Sciatic nerve (tissue), 2 donors: ENCODE measurements at regions of chr21 and their contacts with region 1.

Region 1: DNA sequence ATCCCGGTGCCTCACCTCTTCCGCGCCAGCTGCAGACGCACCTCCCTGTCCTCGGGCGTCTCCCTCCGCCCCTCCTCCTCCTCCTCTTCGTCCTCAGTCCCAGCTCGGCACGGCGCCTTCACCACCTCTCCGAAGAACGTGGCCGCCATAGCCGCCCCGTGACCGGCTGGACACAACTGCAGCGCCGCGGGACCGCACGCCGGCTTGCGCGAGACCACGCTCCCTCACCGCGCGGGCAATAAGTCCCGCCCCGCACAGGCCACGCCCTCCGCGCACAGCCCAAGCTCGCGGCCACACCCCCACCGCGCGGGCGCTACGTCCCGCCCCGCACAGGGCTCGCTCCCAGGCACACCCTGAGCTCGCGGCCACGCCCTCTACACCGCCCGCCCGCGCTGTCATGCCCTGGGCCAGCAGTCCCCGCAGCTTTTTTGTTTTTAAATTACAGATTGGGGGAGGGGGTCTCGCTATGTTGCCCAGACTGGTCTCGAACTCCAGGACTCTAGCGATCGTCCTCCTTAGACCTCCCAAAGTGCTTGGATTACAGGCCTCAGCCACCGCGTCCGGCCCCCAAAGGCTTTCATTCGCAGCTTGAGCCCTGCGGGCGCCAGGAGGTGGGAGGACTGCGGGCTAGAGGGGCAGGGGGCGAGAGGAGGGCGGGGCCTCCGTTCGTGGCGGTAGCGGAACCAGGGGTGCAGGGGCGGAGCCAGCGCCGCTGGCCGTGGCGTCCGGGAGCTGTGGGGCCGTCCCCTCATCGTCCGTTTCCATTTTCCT is at the start of gene PSMG1:
- DNase-seq: peak; percentile 96
- ATAC-seq: peak; percentile 97
- total RNA-seq, gene PSMG1: 18.2 TPM

Region 2: DNA sequence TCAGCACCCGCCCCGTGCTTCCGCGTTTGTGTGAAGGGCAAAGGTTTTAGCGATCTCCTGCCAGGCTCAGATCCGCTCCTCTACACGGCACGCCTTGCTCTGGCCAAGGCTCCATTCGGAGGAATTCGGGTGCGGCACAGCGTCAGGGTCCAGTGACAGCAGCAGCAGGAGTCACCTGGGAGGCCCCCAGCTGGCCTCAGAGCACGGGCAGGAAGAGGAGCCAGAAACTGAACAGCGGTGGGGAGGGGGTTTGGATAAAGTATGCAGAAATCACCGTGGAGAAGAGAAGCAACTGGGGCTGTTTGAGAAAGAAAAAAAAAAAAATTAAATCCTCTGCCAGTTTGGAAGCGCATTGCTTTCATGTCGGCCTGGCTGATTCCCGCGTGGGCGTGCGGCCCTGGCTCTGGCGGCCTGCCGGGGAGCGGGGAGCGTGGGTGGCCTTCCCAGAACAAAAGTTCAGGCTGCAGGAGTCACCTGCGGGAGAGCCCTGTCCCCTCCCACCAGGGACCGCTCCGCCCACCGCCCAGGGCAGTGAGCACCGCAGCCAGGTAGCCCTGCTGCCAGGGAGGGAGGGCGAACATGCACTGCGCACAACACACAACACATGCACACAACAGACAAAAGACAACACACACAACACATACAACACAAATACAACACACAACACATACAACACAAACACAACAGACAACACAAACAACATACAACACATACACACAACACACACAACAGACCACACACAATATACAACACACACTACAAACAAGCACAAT is 270.1 kb before region 1 on chr21:
- intact Hi-C with region 1: no loop called
- DNase-seq: peak; percentile 79
- ATAC-seq: peak; percentile 92

Region 3: DNA sequence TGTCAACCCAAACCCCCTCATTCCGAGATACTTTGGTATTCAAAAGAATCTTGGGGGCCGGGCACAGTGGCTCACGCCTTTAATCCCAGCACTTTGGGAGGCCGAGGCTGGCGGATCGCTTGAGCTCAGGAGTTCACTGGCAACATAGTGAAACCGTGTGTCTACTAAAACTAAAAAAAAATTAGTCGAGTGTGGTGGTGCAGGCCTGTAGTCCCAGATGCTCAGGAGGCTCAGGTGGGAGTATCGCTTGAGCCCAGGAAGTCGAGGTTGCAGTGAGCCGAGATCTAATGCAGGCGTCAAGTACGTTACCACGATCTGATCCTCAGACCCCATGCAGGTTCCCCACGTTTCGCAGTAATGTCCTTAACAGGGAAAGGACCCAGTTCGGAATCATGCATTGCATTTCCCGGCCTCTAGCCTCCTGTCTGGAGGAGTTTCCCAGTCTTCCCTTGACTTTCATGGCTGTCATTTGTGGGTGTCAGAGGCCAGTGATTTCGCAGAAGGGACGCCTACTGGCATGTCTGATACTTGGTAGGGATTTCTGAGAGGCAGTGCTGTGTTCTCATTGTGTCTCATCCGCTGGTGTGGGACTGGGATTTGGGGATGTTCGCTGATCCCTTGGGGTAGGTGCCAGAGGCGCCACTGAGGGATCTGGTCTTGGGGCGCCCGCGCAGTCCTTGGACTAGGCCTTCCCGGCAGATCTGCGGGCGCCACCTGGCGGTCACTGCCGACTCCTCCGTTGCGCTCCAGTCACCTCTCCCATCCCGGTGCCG is 204.8 kb after region 1 on chr21:
- intact Hi-C with region 1: loop called (anchors 10 kb)
- DNase-seq: peak; percentile 97
- ATAC-seq: peak; percentile 90

Region 4: GRCh38 chr21:41068967-41069642 is 1885.7 kb after region 1 on chr21:
- intact Hi-C with region 1: no loop called
- DNase-seq: peak; percentile 90
- ATAC-seq: peak; percentile 90